ENCODE measurements at regions of chr17 and their contacts with region 1.

Region 1: GRCh38 chr17:40075201-40075941 is 12.6 kb downstream of the THRA start:
- DNase-seq: no peak
- H3K4me3 ChIP-seq: no peak overlapping the region
- H3K27ac ChIP-seq: no peak overlapping the region
- H3K27me3 ChIP-seq: no peaks in the 10 kb centered on the region
- CTCF ChIP-seq: peak; percentile 91

Region 2: GRCh38 chr17:39787743-39788484 is 287.5 kb before region 1 on chr17:
- CTCF ChIA-PET with region 1: interaction called, 10 read pairs
- POLR2A ChIA-PET with region 1: no interaction called
- DNase-seq: no peak
- H3K4me3 ChIP-seq: no peak overlapping the region
- H3K27ac ChIP-seq: no peak overlapping the region
- H3K27me3 ChIP-seq: peaks cover 34% of the 10 kb centered on the region
- CTCF ChIP-seq: no peak

Region 3: DNA sequence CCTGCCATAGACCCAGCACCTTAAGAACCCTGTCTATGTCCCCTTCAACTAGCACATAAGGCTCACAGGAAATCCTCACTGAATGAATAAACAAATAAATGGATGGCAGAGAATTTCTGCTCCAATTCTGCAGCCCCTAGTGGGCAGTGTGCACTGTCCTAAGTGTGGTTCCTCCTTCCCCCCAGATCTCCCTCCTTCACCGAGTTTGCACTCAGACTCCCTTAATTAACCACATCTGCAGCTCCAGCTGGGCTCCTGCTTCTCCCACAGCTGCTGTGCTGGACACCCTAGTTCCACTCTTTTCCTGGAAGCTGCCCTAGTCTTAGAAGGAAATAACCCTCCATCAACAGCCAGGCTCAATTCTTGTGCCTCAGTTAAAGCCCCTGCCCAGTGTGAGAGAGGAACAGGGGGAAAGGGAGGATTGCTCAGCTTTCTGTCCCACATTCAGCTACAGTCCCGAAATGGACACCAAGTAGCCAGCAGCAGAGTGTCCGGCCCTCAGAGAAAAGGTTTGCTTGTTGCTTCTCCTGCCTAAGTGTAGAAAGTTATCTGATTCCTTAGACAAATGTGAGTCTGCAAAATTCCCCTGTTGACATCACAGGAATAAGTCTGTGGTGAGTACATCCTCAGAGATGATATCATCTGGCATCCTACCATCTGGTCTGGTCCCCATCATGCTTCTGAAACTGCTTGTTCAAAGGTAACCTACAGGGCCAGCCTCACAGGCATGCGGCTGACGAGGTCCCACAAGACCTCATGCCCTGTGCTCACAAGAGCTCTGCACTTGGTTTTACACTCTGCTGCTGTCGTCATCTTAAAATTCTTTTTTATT is 135.6 kb before region 1 on chr17:
- CTCF ChIA-PET with region 1: no interaction called
- POLR2A ChIA-PET with region 1: no interaction called
- DNase-seq: peak; percentile 72
- H3K4me3 ChIP-seq: peak overlapping the region; percentile 26
- H3K27ac ChIP-seq: peak overlapping the region; percentile 99
- H3K27me3 ChIP-seq: no peaks in the 10 kb centered on the region
- CTCF ChIP-seq: peak; percentile 79

Region 4: DNA sequence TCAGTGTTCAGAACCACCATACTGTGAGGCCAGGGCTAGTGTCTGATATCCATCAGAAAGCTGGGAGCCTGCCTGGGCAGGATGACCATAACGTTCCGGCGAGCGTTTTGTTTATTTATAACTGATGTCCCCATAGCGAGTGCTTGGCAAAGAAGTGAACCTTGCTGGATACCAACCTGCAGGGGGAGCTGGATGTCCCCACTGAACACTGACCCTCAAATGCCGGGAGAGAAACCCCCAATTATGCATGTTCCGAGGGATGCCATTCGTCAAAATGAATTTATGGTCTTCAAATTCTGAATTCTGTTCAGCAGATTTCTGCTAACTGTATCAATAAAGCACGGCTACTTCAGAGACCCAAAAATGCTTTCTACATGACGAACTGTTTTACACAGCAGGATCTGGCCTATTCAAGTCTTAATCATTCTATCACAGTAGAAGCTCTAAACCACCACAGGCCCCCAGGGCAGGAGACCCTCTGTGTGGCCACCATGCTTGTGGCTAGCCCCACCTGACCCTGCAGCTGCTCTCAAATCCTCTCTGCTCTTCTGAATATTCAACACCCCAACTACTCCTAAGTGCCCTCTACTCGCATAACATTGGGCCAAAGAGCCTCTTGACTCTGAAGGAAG is 36.4 kb before region 1 on chr17:
- CTCF ChIA-PET with region 1: interaction called, 24 read pairs
- POLR2A ChIA-PET with region 1: interaction called, 3 read pairs
- DNase-seq: peak; percentile 66
- H3K4me3 ChIP-seq: no peak overlapping the region; the same call in 1 of the 2 replicates
- H3K27ac ChIP-seq: peak overlapping the region; percentile 52
- H3K27me3 ChIP-seq: no peaks in the 10 kb centered on the region
- CTCF ChIP-seq: peak; percentile 87

Region 5: DNA sequence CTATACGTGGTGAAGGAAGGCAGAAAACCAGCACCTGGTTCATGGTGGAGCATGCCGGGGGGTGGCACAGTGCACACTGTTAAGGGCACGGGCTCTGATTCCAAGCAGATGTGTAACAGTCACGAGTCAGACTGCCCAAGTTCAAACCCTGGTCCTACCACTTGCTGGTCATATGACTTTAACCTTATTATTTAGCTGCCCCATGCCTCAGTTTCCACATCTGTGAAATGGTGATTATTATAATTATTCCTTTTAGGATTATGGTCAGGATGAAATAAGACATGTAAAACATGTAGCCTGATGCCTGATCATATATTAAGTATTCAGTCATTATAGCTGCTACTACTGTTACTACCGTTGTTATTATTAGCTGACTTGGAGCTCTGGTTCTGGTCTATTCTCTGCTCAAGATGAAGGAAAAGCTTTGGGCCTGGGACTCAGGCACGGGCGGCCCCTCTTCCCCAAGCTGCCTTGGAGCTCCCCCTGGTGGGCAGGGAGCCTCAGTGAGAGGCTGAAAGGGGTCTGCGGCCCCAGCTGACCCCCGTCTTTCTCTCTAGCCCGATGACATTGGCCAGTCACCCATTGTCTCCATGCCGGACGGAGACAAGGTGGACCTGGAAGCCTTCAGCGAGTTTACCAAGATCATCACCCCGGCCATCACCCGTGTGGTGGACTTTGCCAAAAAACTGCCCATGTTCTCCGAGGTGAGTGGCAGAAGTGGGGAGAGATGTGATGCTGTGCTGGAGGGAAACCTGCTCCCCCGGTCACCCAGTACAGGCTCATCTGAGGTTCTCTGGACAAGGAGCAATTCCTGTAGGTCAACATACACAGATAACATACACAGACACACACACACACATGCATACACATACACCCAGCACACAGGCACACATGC is 11.0 kb after region 1 on chr17:
- CTCF ChIA-PET with region 1: interaction called, 58 read pairs
- POLR2A ChIA-PET with region 1: no interaction called
- DNase-seq: no peak
- H3K4me3 ChIP-seq: no peak overlapping the region
- H3K27ac ChIP-seq: no peak overlapping the region
- H3K27me3 ChIP-seq: no peaks in the 10 kb centered on the region
- CTCF ChIP-seq: peak; percentile 81

Region 6: DNA sequence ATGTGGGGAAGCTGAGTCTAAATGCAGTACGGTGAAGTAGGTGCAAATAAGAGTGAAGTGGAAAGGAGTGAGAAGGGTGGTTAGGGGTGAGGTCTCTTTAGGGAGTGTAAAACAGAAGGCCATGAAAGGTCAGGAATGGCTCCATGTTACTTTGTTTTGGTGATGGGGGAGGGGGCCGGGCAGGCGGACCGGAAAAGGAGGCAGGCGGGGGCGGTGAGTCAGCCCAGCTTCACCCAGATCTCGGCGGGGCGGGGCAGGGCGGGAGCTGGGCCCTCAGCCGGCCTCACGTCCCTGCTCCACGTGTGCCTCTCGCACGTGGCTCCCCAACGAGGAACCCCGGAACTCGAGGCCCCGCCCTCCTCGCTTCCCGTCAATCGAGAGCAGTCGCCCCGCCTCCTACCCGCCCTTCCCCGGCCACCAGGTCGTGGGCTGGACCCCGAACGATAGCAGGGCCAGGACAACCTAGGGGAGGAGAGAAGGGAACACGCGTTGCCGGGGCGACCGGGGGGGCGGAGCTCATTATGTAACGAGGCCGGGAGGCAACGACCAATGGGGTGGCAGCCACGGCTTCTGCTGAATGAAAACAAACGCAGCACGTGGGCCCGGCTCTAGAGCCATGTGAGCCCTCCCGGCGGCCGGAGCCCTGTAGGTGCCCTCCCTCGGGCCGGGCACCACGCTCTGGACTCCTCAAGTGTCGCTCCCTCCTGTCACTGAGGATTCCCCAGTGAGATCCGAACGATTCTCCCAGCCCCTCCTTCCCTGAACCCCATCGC is 23.7 kb after region 1 on chr17:
- CTCF ChIA-PET with region 1: interaction called, 16 read pairs
- POLR2A ChIA-PET with region 1: interaction called, 9 read pairs
- DNase-seq: peak; percentile 98
- H3K4me3 ChIP-seq: peak overlapping the region; percentile 76
- H3K27ac ChIP-seq: peak overlapping the region; percentile 85
- H3K27me3 ChIP-seq: no peaks in the 10 kb centered on the region
- CTCF ChIP-seq: no peak

Region 7: GRCh38 chr17:40113110-40113906 is 37.9 kb after region 1 on chr17:
- CTCF ChIA-PET with region 1: interaction called, 47 read pairs
- POLR2A ChIA-PET with region 1: interaction called, 3 read pairs
- DNase-seq: peak; percentile 87
- H3K4me3 ChIP-seq: peak overlapping the region; percentile 54
- H3K27ac ChIP-seq: peak overlapping the region; percentile 84
- H3K27me3 ChIP-seq: no peaks in the 10 kb centered on the region
- CTCF ChIP-seq: peak; percentile 84

Region 8: DNA sequence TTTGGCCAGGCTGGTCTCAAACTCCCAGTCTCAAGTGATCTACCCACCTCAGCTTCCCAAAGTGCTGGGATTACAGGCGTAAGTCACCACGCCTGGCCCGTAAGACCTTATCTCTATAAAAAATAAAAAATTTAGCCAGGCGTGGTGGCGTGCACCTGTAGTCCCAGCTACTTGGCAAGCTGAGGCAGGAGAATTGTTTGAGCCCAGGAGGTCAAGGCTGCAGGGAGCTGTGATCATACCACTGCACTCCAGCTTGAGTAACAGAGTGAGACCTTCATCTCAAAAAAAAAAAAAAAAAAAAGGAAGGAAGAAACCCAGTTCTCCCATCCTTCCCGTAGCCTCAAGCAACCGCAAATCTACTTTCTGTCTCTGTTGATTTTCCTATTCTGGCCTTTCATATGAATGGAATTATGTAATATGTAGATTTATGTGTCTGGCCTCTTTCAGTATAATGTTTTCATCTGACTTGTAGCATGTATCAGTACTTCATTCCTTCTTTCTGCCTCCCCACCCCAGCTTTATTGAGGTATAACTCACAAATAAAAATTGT is 76.1 kb after region 1 on chr17:
- CTCF ChIA-PET with region 1: interaction called, 11 read pairs
- POLR2A ChIA-PET with region 1: no interaction called
- DNase-seq: no peak
- H3K4me3 ChIP-seq: no peak overlapping the region
- H3K27ac ChIP-seq: no peak overlapping the region
- H3K27me3 ChIP-seq: no peaks in the 10 kb centered on the region
- CTCF ChIP-seq: no peak

Measured in AG04450 (cell line).